Uterus (tissue), 4 donors: ENCODE measurements at regions of chr10 and their contacts with region 1.

Region 1: GRCh38 chr10:93916257-93917063 is 22.7 kb downstream of the SLC35G1 start:
- DNase-seq: no peak
- H3K4me3 ChIP-seq: no peak overlapping the region
- H3K27ac ChIP-seq: peak overlapping the region in 1 of 2 donors; percentile 55
- H3K4me1 ChIP-seq: no peaks in the 10 kb centered on the region
- H3K27me3 ChIP-seq: no peaks in the 10 kb centered on the region
- CTCF ChIP-seq: peak; percentile 59 to 66 (median 64)
- POLR2A ChIP-seq: no peak

Region 2: DNA sequence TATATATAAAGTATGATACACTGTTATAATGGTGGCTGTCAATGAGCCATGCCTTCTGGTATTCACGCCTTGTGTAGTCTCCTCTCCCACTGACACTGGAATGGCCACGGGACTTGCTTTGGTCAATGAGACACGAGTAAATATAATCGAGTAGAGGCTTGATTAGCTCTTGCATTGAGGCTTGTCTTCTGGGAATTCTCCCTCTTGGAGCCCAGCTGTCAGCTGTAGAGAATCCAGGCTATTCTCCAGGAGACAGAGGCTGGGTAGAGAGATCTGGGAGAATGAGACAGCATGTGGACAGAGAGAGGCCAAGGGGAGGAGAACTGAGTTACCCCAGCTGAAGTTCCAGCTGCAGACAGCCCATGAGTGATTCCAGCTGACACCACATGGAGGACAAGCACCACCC is 52.1 kb after region 1 on chr10:
- intact Hi-C with region 1: no loop called
- DNase-seq: no peak
- H3K4me3 ChIP-seq: no peak overlapping the region
- H3K27ac ChIP-seq: no peak overlapping the region
- H3K4me1 ChIP-seq: no peaks in the 10 kb centered on the region
- H3K27me3 ChIP-seq: no peaks in the 10 kb centered on the region
- CTCF ChIP-seq: no peak
- POLR2A ChIP-seq: no peak

Region 3: DNA sequence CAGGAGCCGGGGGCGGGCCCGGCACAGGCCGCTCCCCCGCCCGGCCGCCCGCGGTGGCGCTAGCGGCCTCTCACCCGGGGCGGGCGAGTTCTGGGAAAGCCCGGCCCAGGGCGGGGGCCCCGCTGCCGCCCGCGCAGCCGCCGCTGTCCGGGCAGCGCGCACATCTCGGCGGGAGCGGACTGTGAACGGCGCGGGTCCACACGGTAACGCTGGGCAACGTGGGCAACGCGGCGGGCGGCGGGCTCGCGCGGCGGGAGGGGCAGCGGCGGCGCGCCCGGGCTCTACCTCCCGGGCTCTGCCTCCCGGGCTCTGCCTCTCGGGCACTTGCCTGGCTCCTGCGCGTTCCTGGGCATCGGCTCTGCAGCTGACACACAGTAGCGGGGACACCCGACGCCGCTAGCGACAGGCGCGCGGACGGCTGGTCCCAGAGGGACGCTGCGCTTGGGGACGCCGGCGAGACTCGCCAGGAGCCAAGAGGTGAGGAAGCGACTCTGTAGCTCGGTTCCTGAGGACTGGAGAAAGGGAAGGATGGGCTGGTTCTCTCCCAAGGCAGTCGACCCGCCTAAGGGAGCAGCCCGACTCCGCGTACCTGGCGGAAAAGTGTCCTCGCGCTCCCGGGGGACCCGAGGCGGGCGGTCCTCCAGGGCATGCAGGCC is 77.5 kb after region 1 on chr10 and contains the start of gene PLCE1:
- intact Hi-C with region 1: no loop called
- DNase-seq: peak; percentile 24 to 40
- H3K4me3 ChIP-seq: peak within 1 kb of the TSS; percentile 54 to 84
- H3K27ac ChIP-seq: peak within 1 kb of the TSS; percentile 62 to 74
- H3K4me1 ChIP-seq: peaks cover 0 to 3% of the 10 kb centered on the region in 2 donors
- H3K27me3 ChIP-seq: no peaks in the 10 kb centered on the region
- CTCF ChIP-seq: peak in 1 of 4 experiments; percentile 29
- POLR2A ChIP-seq: no peak
- total RNA-seq, gene PLCE1: 7.1 to 21.7 (median 12.9) TPM

Region 4: DNA sequence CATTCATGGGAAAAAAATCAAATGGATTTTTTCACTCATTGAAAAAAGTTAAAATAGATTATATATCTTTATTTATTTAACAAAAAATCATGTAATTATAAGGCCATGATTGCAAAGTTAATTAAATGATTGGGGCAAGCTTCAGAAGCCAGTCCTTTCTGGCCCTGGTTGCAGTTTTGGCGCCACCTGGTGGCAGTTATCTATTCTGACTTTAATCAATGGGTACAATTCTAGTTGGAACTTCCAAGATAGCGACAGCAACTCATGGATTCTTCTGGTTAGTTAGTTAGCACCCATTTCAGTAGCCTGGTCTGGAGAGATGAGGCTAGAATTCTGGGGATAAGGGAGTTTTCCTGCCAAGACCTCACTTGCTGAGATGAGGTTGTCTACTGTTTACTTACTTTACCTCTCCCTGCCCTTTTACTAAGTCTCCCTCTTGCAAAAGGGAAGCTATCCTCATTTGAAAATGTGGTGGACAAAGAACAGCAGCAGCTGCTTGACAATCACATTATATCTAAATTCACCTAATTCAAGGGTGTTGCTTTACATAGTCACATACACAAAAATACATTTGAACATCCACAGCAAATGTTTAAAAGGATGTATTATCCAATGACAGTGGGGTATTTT is 403.9 kb after region 1 on chr10:
- intact Hi-C with region 1: loop called (anchors 5 kb)
- DNase-seq: peak; percentile 49 to 70
- H3K4me3 ChIP-seq: no peak overlapping the region
- H3K27ac ChIP-seq: no peak overlapping the region
- H3K4me1 ChIP-seq: no peaks in the 10 kb centered on the region
- H3K27me3 ChIP-seq: no peaks in the 10 kb centered on the region
- CTCF ChIP-seq: peak; percentile 63 to 93 (median 79)
- POLR2A ChIP-seq: no peak